IMR-90 (cell line): ENCODE measurements at regions of chr2 and their contacts with region 1.

Region 1: GRCh38 chr2:12931186-12931844 is 214.6 kb downstream of the TRIB2 start:
- DNase-seq: peak; percentile 63
- ATAC-seq: peak; percentile 93
- H3K4me3 ChIP-seq: no peak overlapping the region
- H3K27ac ChIP-seq: no peak overlapping the region
- H3K4me1 ChIP-seq: peaks cover 10% of the 10 kb centered on the region
- H3K27me3 ChIP-seq: no peaks in the 10 kb centered on the region
- CTCF ChIP-seq: peak; percentile 90
- POLR2A ChIP-seq: 0 out of 2 replicates have a peak, but pooled peaks have one; percentile 29
- RAD21 ChIP-seq: peak; percentile 93

Region 2: GRCh38 chr2:11863513-11864328 is 1067.6 kb before region 1 on chr2:
- CTCF ChIA-PET with region 1: no interaction called
- POLR2A ChIA-PET with region 1: no interaction called
- dilution Hi-C with region 1: no loop called
- in situ Hi-C with region 1: no loop called
- intact Hi-C with region 1: loop called (anchors 1 kb)
- DNase-seq: peak; percentile 82
- ATAC-seq: peak; percentile 99
- H3K4me3 ChIP-seq: peak overlapping the region; percentile 10; the same call in 1 of the 2 replicates
- H3K27ac ChIP-seq: peak overlapping the region; percentile 66
- H3K4me1 ChIP-seq: peaks cover 2% of the 10 kb centered on the region; the same call in 1 of the 2 replicates
- H3K27me3 ChIP-seq: no peaks in the 10 kb centered on the region; the same call in 1 of the 2 replicates
- CTCF ChIP-seq: peak; percentile 85
- POLR2A ChIP-seq: no peak
- RAD21 ChIP-seq: peak; percentile 93

Region 3: DNA sequence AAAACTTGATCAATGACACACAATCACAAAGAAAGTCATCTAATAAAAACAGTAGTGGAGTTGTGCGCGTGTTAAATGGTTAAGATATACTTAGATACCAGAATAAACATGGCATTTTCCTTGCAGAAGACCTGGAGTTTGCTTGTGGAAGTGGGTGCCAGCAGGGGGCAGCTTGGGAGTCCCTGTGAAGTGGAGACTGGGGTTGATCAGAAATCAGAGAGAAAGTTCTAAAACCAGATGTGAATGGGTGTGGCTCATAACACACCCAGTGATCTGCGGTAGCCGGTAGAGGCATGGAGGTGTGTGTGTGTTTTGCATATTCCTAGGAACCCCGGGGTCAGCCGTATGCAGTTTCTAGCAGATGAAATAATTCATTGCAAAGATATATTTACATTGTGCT is 514.7 kb before region 1 on chr2:
- CTCF ChIA-PET with region 1: no interaction called
- POLR2A ChIA-PET with region 1: no interaction called
- dilution Hi-C with region 1: no loop called
- in situ Hi-C with region 1: no loop called
- intact Hi-C with region 1: loop called (anchors 5 kb)
- DNase-seq: peak; percentile 48
- ATAC-seq: peak; percentile 63
- H3K4me3 ChIP-seq: no peak overlapping the region
- H3K27ac ChIP-seq: peak overlapping the region; percentile 20; the same call in 1 of the 2 replicates
- H3K4me1 ChIP-seq: peaks cover 8% of the 10 kb centered on the region
- H3K27me3 ChIP-seq: no peaks in the 10 kb centered on the region
- CTCF ChIP-seq: peak; percentile 53
- POLR2A ChIP-seq: no peak
- RAD21 ChIP-seq: peak; percentile 62

Region 4: DNA sequence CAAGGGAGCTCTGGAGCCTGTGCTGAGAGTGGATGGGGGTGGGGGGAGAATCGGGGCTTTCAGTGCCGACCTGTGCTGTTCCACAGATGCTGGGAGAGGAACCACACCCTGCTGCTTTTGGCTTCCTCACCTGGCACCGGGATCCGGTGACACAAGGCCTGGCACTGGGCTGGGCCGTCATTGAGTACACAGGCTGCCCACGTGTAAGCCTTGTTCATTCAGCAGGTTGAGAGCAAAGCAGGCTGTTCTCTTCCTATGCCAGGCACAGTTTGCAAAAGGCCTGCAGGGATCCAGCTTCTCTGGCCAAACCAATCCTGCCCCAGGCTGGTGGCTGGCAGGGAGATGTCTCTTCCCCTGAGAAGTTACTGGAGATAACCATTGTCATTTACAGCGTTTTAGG is 197.5 kb before region 1 on chr2:
- CTCF ChIA-PET with region 1: no interaction called
- POLR2A ChIA-PET with region 1: no interaction called
- dilution Hi-C with region 1: no loop called
- in situ Hi-C with region 1: loop called (anchors 10 kb)
- intact Hi-C with region 1: no loop called
- DNase-seq: no peak
- ATAC-seq: no peak
- H3K4me3 ChIP-seq: no peak overlapping the region
- H3K27ac ChIP-seq: no peak overlapping the region
- H3K4me1 ChIP-seq: no peaks in the 10 kb centered on the region
- H3K27me3 ChIP-seq: no peaks in the 10 kb centered on the region
- CTCF ChIP-seq: no peak
- POLR2A ChIP-seq: no peak
- RAD21 ChIP-seq: no peak

Region 5: GRCh38 chr2:12834239-12834638 is 97.1 kb before region 1 on chr2:
- CTCF ChIA-PET with region 1: no interaction called
- POLR2A ChIA-PET with region 1: interaction called, 17 read pairs
- dilution Hi-C with region 1: no loop called
- in situ Hi-C with region 1: no loop called
- intact Hi-C with region 1: no loop called
- DNase-seq: no peak
- ATAC-seq: no peak
- H3K4me3 ChIP-seq: no peak overlapping the region
- H3K27ac ChIP-seq: no peak overlapping the region
- H3K4me1 ChIP-seq: no peaks in the 10 kb centered on the region
- H3K27me3 ChIP-seq: no peaks in the 10 kb centered on the region
- CTCF ChIP-seq: no peak
- POLR2A ChIP-seq: no peak
- RAD21 ChIP-seq: no peak

Region 6: GRCh38 chr2:13289310-13289709 is 358.0 kb after region 1 on chr2:
- CTCF ChIA-PET with region 1: no interaction called
- POLR2A ChIA-PET with region 1: no interaction called
- dilution Hi-C with region 1: no loop called
- in situ Hi-C with region 1: no loop called
- intact Hi-C with region 1: no loop called
- DNase-seq: no peak
- ATAC-seq: no peak
- H3K4me3 ChIP-seq: no peak overlapping the region
- H3K27ac ChIP-seq: no peak overlapping the region
- H3K4me1 ChIP-seq: no peaks in the 10 kb centered on the region
- H3K27me3 ChIP-seq: no peaks in the 10 kb centered on the region
- CTCF ChIP-seq: no peak
- POLR2A ChIP-seq: no peak
- RAD21 ChIP-seq: no peak